ENCODE measurements at regions of chr10 and their contacts with region 1.

Region 1: DNA sequence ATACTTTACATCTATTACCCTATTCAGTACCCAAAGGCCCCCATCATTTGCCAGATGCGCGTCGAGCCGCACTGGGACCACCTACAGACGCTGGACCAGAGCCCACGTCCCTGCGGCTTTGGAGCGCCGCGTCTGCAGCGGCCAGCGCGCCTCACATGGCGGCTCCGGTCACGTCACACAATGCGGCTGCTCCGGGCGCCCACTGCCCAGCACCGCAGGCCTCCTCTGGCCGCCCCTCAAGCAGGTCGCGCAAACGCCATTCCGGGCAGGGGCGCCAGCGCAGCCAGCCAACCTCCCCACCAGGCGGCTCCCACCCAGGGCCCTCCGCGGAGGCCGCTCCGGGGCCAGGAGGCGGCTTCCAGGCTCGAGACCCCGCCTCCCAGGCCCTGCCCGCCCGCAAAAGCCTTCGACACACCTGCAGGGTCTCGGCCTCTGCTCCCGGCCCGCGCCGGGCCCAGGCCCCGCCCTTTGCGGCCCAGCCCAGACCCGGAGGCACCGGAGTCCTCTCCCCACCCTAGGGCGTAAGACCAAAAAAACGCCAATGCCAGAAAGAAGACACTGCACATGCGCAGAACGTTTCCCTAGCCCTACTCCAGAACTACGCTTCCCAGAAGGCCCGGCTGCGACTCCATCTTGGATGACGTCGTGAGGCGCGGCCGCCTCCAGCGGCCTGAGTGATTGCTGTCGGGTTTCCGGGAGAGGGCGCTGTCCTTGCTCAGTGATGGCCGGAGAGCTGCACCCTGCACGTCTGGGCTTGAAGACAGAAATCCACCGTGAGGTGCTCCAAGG is at the start of gene ZNF25:
- DNase-seq: peak; percentile 99
- ATAC-seq: peak; percentile 100
- H3K4me3 ChIP-seq: peak within 1 kb of the TSS; percentile 83 to 93
- H3K27ac ChIP-seq: peak within 1 kb of the TSS; percentile 89 to 97
- H3K4me1 ChIP-seq: no peaks in the 10 kb centered on the region
- H3K27me3 ChIP-seq: no peaks in the 10 kb centered on the region
- total RNA-seq, gene ZNF25: 23.0 to 23.2 TPM

Region 2: GRCh38 chr10:37734976-37735375 is 241.3 kb before region 1 on chr10:
- intact Hi-C with region 1: no loop called
- DNase-seq: no peak
- ATAC-seq: no peak
- H3K4me3 ChIP-seq: no peak overlapping the region
- H3K27ac ChIP-seq: no peak overlapping the region
- H3K4me1 ChIP-seq: no peaks in the 10 kb centered on the region
- H3K27me3 ChIP-seq: no peaks in the 10 kb centered on the region

Region 3: GRCh38 chr10:37885850-37886249 is 90.4 kb before region 1 on chr10:
- intact Hi-C with region 1: no loop called
- DNase-seq: no peak
- ATAC-seq: no peak
- H3K4me3 ChIP-seq: no peak overlapping the region
- H3K27ac ChIP-seq: no peak overlapping the region
- H3K4me1 ChIP-seq: no peaks in the 10 kb centered on the region
- H3K27me3 ChIP-seq: no peaks in the 10 kb centered on the region

Region 4: GRCh38 chr10:37930423-37930822 is 45.9 kb before region 1 on chr10:
- intact Hi-C with region 1: no loop called
- DNase-seq: no peak
- ATAC-seq: no peak
- H3K4me3 ChIP-seq: no peak overlapping the region
- H3K27ac ChIP-seq: no peak overlapping the region
- H3K4me1 ChIP-seq: no peaks in the 10 kb centered on the region
- H3K27me3 ChIP-seq: no peaks in the 10 kb centered on the region

Region 5: DNA sequence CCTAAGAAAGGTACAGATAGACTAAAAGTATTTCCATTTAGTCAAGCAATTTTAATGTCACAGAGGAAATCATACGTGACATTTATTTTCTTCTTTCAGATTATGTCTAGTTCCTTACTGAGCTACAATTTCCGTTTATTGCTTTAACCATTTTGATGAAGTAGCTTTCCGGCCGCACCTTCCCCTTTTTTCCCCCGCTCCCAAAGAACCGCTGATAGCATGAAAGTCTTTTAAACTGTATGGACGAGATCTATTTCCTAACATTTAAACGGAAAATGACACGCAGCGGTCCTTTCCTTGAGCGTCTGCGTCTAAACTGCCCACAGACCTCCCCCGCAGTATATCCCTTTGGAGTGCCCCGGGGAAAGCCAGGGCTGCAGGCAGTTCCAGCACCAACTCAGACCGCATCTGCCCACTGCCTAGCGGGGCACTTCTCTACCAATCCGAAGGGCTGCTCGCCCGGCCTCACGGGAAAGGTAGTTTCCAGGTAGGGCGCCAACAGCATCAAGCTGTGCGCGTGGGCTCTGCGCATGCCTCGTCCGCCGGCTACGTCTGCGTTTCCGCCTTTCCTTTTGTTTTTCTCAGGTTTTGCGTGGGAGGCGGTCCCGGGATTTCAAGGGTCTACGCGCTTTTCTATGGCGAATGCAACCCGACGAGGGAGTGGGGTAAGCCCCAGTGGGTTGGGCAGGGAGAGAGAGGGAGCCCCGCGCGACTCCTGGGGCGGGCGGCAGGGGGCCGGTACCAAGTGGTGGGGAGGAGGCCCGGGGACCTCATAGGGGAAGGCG is 34.0 kb after region 1 on chr10 and contains the start of gene ZNF33A:
- intact Hi-C with region 1: loop called (anchors 2 to 5 kb)
- DNase-seq: peak; percentile 95 to 96
- ATAC-seq: peak; percentile 96
- H3K4me3 ChIP-seq: peak within 1 kb of the TSS; percentile 72 to 84
- H3K27ac ChIP-seq: peak within 1 kb of the TSS; percentile 88 to 89
- H3K4me1 ChIP-seq: no peaks in the 10 kb centered on the region
- H3K27me3 ChIP-seq: no peaks in the 10 kb centered on the region
- total RNA-seq, gene ZNF33A: 28.9 to 31.6 TPM

Region 6: DNA sequence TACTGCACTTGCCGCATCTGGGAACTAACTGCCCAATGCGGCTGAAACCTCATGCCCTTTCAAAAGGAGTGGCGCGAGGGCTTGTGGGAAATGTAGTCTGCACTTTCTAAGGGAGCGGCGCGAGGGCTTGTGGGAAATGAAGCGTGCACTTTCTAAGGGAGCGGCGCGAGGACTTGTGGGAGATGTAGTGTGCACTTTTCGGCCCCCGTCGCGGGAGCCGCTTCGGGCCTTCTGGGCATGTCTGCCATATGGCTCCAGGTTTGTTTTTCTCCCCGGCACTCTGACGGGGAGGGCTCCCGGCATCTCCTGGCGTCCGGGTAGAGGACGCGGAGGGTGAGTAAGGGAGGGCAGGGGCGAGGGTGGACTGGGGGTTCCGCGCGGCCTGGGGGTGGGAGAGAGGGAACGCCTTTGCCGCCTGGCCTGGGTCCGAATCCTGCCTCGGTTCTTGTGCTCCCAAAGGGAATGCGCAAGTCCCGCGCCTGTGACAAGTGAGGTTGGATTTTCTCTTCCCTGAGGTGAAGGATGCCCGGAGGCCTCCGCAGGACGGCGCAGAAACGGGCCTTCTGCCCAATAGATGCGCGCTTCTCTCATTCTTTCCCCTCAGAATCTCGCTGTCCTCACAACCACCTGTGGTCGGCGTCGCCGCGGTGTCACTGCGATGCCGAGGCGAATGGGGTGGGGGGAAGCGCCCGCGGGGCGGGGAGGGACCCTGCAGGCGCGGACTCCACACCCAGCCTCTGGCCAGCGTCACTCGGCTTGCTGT is 118.1 kb after region 1 on chr10 and contains the start of gene ZNF37A:
- intact Hi-C with region 1: loop called (anchors 2 to 5 kb)
- DNase-seq: peak; percentile 95 to 96
- ATAC-seq: peak; percentile 98
- H3K4me3 ChIP-seq: peak within 1 kb of the TSS; percentile 62 to 71
- H3K27ac ChIP-seq: no peak within 1 kb of the TSS
- H3K4me1 ChIP-seq: no peaks in the 10 kb centered on the region
- H3K27me3 ChIP-seq: no peaks in the 10 kb centered on the region
- total RNA-seq, gene ZNF37A: 23.1 to 25.3 TPM